ENCODE measurements at regions of chr1 and their contacts with region 1.

Region 1: GRCh38 chr1:236523701-236524141 is at the start of gene LGALS8:
- DNase-seq: peak; percentile 80 to 88 (median 84)
- H3K4me3 ChIP-seq: peak within 1 kb of the TSS; percentile 87 to 96
- H3K4me3 Mint-ChIP-seq: peak within 1 kb of the TSS; percentile 94 to 100 (median 99)
- H3K27ac ChIP-seq: peak within 1 kb of the TSS; percentile 94
- H3K27ac Mint-ChIP-seq: peak within 1 kb of the TSS; percentile 91 to 99 (median 99)
- H3K4me1 ChIP-seq: peaks cover 22% of the 10 kb centered on the region
- H3K4me1 Mint-ChIP-seq: peaks cover 19 to 63% (median 35%) of the 10 kb centered on the region in 4 donors
- H3K27me3 ChIP-seq: no peaks in the 10 kb centered on the region
- H3K27me3 Mint-ChIP-seq: no peaks in the 10 kb centered on the region
- total RNA-seq, gene LGALS8: 193 to 196 TPM

Region 2: GRCh38 chr1:236545621-236546169 is 22.0 kb after region 1 on chr1:
- CTCF ChIA-PET with region 1: interaction called, 3 read pairs
- POLR2A ChIA-PET with region 1: interaction called, 18 read pairs
- intact Hi-C with region 1: no loop called
- DNase-seq: peak in 2 of 5 donors; percentile 17 to 47
- H3K4me3 ChIP-seq: no peak overlapping the region
- H3K4me3 Mint-ChIP-seq: peak overlapping the region in 5 of 8 donors; percentile 22 to 60 (median 37)
- H3K27ac ChIP-seq: no peak overlapping the region
- H3K27ac Mint-ChIP-seq: peak overlapping the region; percentile 55 to 93 (median 88)
- H3K4me1 ChIP-seq: peaks cover 21% of the 10 kb centered on the region
- H3K4me1 Mint-ChIP-seq: peaks cover 21 to 33% (median 26%) of the 10 kb centered on the region in 4 donors
- H3K27me3 ChIP-seq: no peaks in the 10 kb centered on the region
- H3K27me3 Mint-ChIP-seq: no peaks in the 10 kb centered on the region